Activated CD4-positive, alpha-beta memory T cell treated with anti-CD3 and anti-CD28 coated beads for 36 hours (primary cell): ENCODE measurements at regions of chr12 and their contacts with region 1.

Region 1: DNA sequence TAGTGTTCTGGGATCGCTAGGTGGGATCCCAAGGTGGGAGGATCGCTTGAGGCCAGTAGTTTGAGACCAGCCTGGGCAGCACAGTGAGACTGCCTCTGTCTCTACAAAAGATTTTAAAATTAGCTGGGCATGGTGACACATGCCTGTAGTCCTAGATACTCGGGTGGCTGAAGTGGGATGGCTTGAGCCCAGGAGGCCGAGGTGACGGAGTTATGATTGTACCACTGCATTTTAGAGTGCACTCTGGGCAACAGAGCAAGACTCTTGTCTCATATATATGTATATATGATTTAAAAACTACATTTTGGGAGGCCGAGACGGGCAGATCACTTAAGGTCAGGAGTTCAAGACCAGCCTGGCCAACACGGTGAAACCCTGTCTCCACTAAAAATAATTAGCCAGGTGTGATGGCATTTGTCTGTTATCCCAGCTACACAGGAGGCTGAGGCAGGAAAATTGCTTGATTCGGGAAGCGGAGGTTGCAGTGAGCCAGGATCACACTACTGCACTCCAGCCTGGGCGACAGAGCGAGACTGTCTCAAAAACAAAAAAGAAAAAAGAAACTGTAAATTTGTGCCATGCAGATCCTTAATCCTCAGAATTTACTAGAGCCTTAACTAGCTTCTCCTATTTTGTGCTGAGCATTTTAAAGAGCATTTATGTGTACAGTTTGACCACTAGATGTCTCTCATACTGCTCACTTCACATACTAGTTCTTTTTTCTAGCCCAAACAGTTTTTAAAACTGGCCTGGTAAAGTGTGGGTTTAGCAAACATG is 114.8 kb downstream of the MON2 start:
- DNase-seq: no peak
- H3K4me3 Mint-ChIP-seq: no peak overlapping the region
- H3K27ac Mint-ChIP-seq: no peak overlapping the region
- H3K4me1 Mint-ChIP-seq: no peaks in the 10 kb centered on the region
- H3K27me3 Mint-ChIP-seq: no peaks in the 10 kb centered on the region

Region 2: GRCh38 chr12:62793256-62794217 is 212.1 kb after region 1 on chr12:
- CTCF ChIA-PET with region 1: interaction called, 205 read pairs
- POLR2A ChIA-PET with region 1: no interaction called
- intact Hi-C with region 1: loop called (anchors 1 kb)
- DNase-seq: peak; percentile 82
- H3K4me3 Mint-ChIP-seq: no peak overlapping the region
- H3K27ac Mint-ChIP-seq: no peak overlapping the region
- H3K4me1 Mint-ChIP-seq: no peaks in the 10 kb centered on the region
- H3K27me3 Mint-ChIP-seq: peaks cover 4% of the 10 kb centered on the region

Region 3: GRCh38 chr12:62813031-62813829 is 231.8 kb after region 1 on chr12:
- CTCF ChIA-PET with region 1: interaction called, 10 read pairs
- POLR2A ChIA-PET with region 1: no interaction called
- intact Hi-C with region 1: no loop called
- DNase-seq: peak; percentile 53
- H3K4me3 Mint-ChIP-seq: no peak overlapping the region
- H3K27ac Mint-ChIP-seq: no peak overlapping the region
- H3K4me1 Mint-ChIP-seq: peaks cover 11% of the 10 kb centered on the region
- H3K27me3 Mint-ChIP-seq: peaks cover 17% of the 10 kb centered on the region